Activated naive CD4-positive, alpha-beta T cell treated with anti-CD3 and anti-CD28 coated beads for 36 hours (primary cell): ENCODE measurements at regions of chr5 and their contacts with region 1.

Region 1: GRCh38 chr5:154940772-154941620 is at the start of gene MRPL22:
- DNase-seq: peak; percentile 97
- H3K4me3 Mint-ChIP-seq: peak within 1 kb of the TSS; percentile 97
- H3K27ac Mint-ChIP-seq: peak within 1 kb of the TSS; percentile 96
- H3K4me1 Mint-ChIP-seq: peaks cover 36% of the 10 kb centered on the region
- H3K27me3 Mint-ChIP-seq: no peaks in the 10 kb centered on the region
- total RNA-seq, gene MRPL22: 88.3 to 92.2 TPM

Region 2: GRCh38 chr5:154038707-154039457 is 902.1 kb before region 1 on chr5 and contains the starts of genes FAM114A2 and MFAP3:
- CTCF ChIA-PET with region 1: no interaction called
- intact Hi-C with region 1: loop called (anchors 1 kb)
- DNase-seq: peak; percentile 93
- H3K4me3 Mint-ChIP-seq: peak within 1 kb of the TSS; percentile 95
- H3K27ac Mint-ChIP-seq: peak within 1 kb of the TSS; percentile 92
- H3K4me1 Mint-ChIP-seq: peaks cover 44% of the 10 kb centered on the region
- H3K27me3 Mint-ChIP-seq: no peaks in the 10 kb centered on the region
- total RNA-seq, gene FAM114A2: 25.0 to 25.9 TPM
- total RNA-seq, gene MFAP3: 7.9 to 8.4 TPM

Region 3: GRCh38 chr5:154445422-154446182 is 495.4 kb before region 1 on chr5 and contains the start of gene SAP30L:
- CTCF ChIA-PET with region 1: no interaction called
- intact Hi-C with region 1: loop called (anchors 1 kb)
- DNase-seq: peak; percentile 94
- H3K4me3 Mint-ChIP-seq: peak within 1 kb of the TSS; percentile 98
- H3K27ac Mint-ChIP-seq: peak within 1 kb of the TSS; percentile 92
- H3K4me1 Mint-ChIP-seq: peaks cover 42% of the 10 kb centered on the region
- H3K27me3 Mint-ChIP-seq: no peaks in the 10 kb centered on the region
- total RNA-seq, gene SAP30L: 29.3 to 30.3 TPM

Region 4: DNA sequence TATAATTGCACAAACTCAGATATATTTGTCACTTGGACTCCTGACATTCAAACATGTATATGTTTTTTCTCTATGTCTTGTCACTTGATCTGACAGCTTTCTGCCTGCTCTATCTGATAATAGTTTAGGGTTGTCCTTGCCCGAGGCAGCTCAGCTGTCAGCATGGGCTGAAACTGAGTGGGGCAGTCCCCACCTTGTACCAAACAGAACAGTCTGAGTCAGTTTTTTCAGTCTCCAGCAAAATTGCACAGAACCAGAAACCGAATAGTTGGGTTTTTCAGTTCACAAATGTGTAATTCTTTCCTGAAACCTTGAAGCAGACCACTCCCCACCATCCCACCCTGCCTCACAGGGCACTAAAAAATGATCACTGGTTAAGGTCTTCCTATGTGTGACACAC is 453.5 kb before region 1 on chr5:
- CTCF ChIA-PET with region 1: no interaction called
- intact Hi-C with region 1: loop called (anchors 10 kb)
- DNase-seq: peak; percentile 71
- H3K4me3 Mint-ChIP-seq: no peak overlapping the region
- H3K27ac Mint-ChIP-seq: no peak overlapping the region
- H3K4me1 Mint-ChIP-seq: peaks cover 39% of the 10 kb centered on the region
- H3K27me3 Mint-ChIP-seq: peaks cover 76% of the 10 kb centered on the region

Region 5: GRCh38 chr5:154647114-154647760 is 293.8 kb before region 1 on chr5:
- CTCF ChIA-PET with region 1: no interaction called
- intact Hi-C with region 1: loop called (anchors 1 kb)
- DNase-seq: peak; percentile 14
- H3K4me3 Mint-ChIP-seq: peak overlapping the region; percentile 55
- H3K27ac Mint-ChIP-seq: no peak overlapping the region
- H3K4me1 Mint-ChIP-seq: peaks cover 12% of the 10 kb centered on the region
- H3K27me3 Mint-ChIP-seq: peaks cover 16% of the 10 kb centered on the region

Region 6: GRCh38 chr5:154878642-154879335 is 62.2 kb before region 1 on chr5:
- CTCF ChIA-PET with region 1: no interaction called
- intact Hi-C with region 1: no loop called
- DNase-seq: no peak
- H3K4me3 Mint-ChIP-seq: no peak overlapping the region
- H3K27ac Mint-ChIP-seq: no peak overlapping the region
- H3K4me1 Mint-ChIP-seq: no peaks in the 10 kb centered on the region
- H3K27me3 Mint-ChIP-seq: no peaks in the 10 kb centered on the region

Region 7: GRCh38 chr5:155004138-155004744 is 63.2 kb after region 1 on chr5:
- CTCF ChIA-PET with region 1: interaction called, 5 read pairs
- intact Hi-C with region 1: loop called (anchors 1 kb)
- DNase-seq: peak; percentile 45
- H3K4me3 Mint-ChIP-seq: no peak overlapping the region
- H3K27ac Mint-ChIP-seq: no peak overlapping the region
- H3K4me1 Mint-ChIP-seq: no peaks in the 10 kb centered on the region
- H3K27me3 Mint-ChIP-seq: peaks cover 19% of the 10 kb centered on the region

Region 8: GRCh38 chr5:155147222-155147621 is 206.2 kb after region 1 on chr5:
- CTCF ChIA-PET with region 1: interaction called, 3 read pairs
- intact Hi-C with region 1: loop called (anchors 2 kb)
- DNase-seq: no peak
- H3K4me3 Mint-ChIP-seq: no peak overlapping the region
- H3K27ac Mint-ChIP-seq: no peak overlapping the region
- H3K4me1 Mint-ChIP-seq: peaks cover 2% of the 10 kb centered on the region
- H3K27me3 Mint-ChIP-seq: peaks cover 4% of the 10 kb centered on the region